ENCODE measurements at regions of chr6 and their contacts with region 1.

Region 1: DNA sequence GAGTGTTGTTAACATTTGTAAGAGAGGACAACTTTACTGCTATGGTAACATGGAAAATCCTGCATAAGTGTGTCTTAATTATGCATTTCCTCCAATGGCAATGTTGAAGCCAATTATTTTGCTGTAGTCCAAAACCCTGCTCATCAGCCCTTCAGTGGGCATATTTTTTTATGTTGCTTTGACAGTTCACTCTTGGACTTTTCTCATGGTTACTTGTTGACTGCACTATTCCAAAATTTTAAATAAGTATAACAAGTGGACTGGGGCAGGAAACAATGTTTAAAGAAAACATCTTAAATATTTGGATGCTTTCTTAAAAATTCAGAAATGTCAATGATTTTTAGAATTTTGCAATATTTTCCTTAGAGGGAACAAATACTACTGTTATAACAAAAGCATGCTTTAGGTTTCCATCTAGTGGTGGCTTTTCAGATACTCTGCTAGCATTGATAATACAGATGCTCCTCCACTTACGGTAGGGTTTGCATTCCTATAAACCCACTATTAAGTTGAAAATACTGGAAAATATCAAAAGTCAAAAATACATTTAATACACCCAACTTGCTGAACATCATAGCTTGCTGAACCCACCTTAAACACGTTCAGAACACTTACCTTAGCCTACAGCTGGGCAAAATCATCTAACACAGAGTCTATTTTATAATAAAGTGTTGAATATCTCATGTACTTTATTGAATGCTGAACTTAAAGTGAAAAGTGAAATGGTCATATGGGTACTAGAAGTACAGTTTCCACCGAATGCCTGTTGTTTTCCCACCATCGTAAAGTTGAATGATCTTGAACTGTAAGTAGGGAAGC is 86.4 kb downstream of the ADGRG6 start:
- DNase-seq: peak in 2 of 42 donors; percentile 6 to 39

Region 2: GRCh38 chr6:142146828-142147662 is 241.2 kb before region 1 on chr6 and contains the starts of genes NMBR and VTA1:
- intact Hi-C with region 1: loop called (anchors 2 kb)
- DNase-seq: peak; percentile 94 to 100 (median 98)

Measured in head of caudate nucleus (tissue), 42 donors.